Endothelial cell of umbilical vein (primary cell): ENCODE measurements at regions of chr18 and their contacts with region 1.

Region 1: GRCh38 chr18:35386600-35387351 is 9.6 kb upstream of the ZNF396 start:
- DNase-seq: peak; percentile 82
- H3K4me3 ChIP-seq: no peak overlapping the region
- H3K27ac ChIP-seq: no peak overlapping the region
- H3K4me1 ChIP-seq: no peaks in the 10 kb centered on the region
- H3K27me3 ChIP-seq: no peaks in the 10 kb centered on the region
- CTCF ChIP-seq: peak; percentile 79 to 83
- POLR2A ChIP-seq: no peak

Region 2: GRCh38 chr18:35122586-35123224 is 264.1 kb before region 1 on chr18:
- CTCF ChIA-PET with region 1: no interaction called
- POLR2A ChIA-PET with region 1: no interaction called
- dilution Hi-C with region 1: no loop called
- intact Hi-C with region 1: no loop called
- DNase-seq: no peak
- H3K4me3 ChIP-seq: no peak overlapping the region
- H3K27ac ChIP-seq: no peak overlapping the region
- H3K4me1 ChIP-seq: no peaks in the 10 kb centered on the region
- H3K27me3 ChIP-seq: no peaks in the 10 kb centered on the region
- CTCF ChIP-seq: no peak
- POLR2A ChIP-seq: no peak

Region 3: DNA sequence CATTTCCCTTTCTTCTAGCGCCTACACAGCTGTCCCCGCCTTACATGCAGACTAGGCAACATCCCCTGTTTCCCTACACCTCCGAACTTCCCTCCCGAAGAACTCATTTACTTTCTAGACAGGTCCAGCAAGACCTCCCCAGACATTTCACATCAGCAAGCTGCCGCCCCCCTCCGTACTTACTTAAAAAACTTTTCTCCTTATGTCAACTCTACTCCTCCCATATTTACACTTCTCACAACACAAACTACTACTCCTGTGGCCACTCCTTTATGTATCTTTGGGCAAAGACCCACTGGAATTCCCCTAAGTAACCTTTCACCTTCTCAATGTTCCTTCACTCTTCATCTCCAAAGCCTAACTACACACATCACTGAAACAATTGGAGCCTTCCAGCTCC is 166.3 kb before region 1 on chr18:
- CTCF ChIA-PET with region 1: no interaction called
- POLR2A ChIA-PET with region 1: no interaction called
- dilution Hi-C with region 1: no loop called
- intact Hi-C with region 1: no loop called
- DNase-seq: no peak
- H3K4me3 ChIP-seq: no peak overlapping the region
- H3K27ac ChIP-seq: no peak overlapping the region
- H3K4me1 ChIP-seq: no peaks in the 10 kb centered on the region
- H3K27me3 ChIP-seq: peaks cover under 1 to 1% of the 10 kb centered on the region in 2 experiments
- CTCF ChIP-seq: no peak
- POLR2A ChIP-seq: no peak

Region 4: DNA sequence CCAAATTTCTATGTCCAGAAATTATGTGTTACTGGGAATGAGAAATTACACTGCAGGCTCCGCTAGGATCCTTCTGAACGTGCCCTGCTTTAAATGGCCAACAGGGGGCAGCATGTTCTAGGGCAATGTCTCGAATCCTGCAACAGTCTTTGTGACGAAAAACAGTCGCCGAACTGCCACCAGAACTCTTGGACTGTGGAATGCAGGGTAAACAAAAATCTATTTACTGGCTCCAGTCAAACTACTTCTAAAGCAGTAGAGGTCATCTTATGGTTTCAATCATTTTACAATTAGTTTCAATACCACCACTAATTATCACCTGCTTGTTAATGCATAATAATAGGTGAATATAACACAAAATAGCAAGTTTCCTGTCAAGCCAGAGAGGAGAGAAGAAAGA is 155.7 kb before region 1 on chr18:
- CTCF ChIA-PET with region 1: interaction called, 22 read pairs
- POLR2A ChIA-PET with region 1: no interaction called
- dilution Hi-C with region 1: no loop called
- intact Hi-C with region 1: loop called (anchors 1 kb)
- DNase-seq: peak; percentile 79
- H3K4me3 ChIP-seq: no peak overlapping the region
- H3K27ac ChIP-seq: no peak overlapping the region
- H3K4me1 ChIP-seq: no peaks in the 10 kb centered on the region
- H3K27me3 ChIP-seq: no peaks in the 10 kb centered on the region
- CTCF ChIP-seq: peak; percentile 78 to 82
- POLR2A ChIP-seq: no peak

Region 5: DNA sequence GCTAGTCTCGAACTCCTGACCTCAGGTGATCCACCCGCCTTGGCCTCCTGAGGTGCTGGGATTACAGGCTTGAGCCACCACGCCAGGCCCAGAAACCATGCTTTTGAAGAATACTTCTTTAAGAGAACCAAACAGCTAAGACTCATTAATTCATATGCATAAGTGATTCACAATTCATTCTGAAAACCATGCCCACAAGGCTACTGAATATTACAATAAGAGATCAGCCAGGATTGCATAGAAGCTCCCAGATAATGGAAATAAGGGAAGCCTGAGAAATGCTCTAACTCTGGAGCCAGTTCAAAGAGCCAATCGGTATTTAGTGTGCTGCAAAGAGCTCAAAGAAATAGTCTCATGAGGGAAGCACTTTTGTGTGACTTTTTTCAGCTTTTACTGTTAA is 12.1 kb before region 1 on chr18:
- CTCF ChIA-PET with region 1: interaction called, 13 read pairs
- POLR2A ChIA-PET with region 1: no interaction called
- dilution Hi-C with region 1: no loop called
- intact Hi-C with region 1: no loop called
- DNase-seq: no peak
- H3K4me3 ChIP-seq: no peak overlapping the region
- H3K27ac ChIP-seq: no peak overlapping the region
- H3K4me1 ChIP-seq: peaks cover 7% of the 10 kb centered on the region
- H3K27me3 ChIP-seq: peaks cover 5% of the 10 kb centered on the region in 2 experiments
- CTCF ChIP-seq: no peak
- POLR2A ChIP-seq: no peak

Region 6: DNA sequence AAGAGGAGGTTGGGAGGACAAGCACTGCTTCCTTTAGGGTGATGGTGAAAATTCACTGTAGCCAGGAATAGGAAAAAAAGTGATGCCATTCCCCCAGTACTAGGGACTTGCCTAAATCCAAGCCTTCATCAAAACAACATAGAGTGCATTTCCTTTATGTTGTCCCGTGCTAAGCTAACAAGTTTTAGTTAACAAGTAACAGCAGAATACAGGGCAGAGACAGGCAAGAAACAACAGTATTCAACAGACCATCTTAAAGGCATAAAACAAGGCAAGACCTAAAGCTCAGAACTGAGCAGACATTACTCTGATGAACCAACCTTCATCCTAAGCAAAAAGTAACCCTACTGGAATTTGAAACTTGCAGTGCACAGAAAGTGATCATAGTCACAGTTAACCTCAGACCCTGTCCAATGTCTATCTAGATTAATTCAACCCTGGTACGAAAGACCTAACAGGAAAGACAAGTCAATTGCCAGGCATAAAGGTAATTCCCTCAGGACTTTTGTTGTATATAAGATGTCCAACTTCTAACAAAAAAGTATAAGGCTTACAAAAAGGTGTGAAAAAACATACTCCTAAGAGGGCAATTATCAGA is 160.3 kb after region 1 on chr18:
- CTCF ChIA-PET with region 1: no interaction called
- POLR2A ChIA-PET with region 1: no interaction called
- dilution Hi-C with region 1: no loop called
- intact Hi-C with region 1: no loop called
- DNase-seq: no peak
- H3K4me3 ChIP-seq: no peak overlapping the region
- H3K27ac ChIP-seq: no peak overlapping the region
- H3K4me1 ChIP-seq: no peaks in the 10 kb centered on the region
- H3K27me3 ChIP-seq: no peaks in the 10 kb centered on the region
- CTCF ChIP-seq: no peak
- POLR2A ChIP-seq: no peak

Region 7: DNA sequence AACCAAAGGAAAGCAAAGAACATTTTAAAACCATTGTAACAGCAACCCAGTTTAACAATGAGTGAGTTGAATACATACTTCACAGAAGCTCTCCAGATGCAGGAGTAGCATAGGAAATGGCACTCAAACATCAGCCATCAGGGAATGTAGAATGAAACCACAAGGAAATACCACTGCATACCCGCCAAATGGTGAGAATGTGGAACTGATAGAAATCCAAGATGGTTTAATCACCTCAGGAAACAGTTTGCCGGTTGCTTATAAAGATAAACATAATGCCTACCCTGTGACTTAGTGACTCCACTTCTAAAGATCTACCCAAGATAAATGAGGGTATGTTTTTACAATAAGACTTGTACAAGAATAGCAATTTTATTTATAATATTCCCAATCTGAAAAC is 326.8 kb after region 1 on chr18:
- CTCF ChIA-PET with region 1: interaction called, 7 read pairs
- POLR2A ChIA-PET with region 1: no interaction called
- dilution Hi-C with region 1: no loop called
- intact Hi-C with region 1: loop called (anchors 5 kb)
- DNase-seq: peak; percentile 92
- H3K4me3 ChIP-seq: no peak overlapping the region
- H3K27ac ChIP-seq: peak overlapping the region; percentile 96
- H3K4me1 ChIP-seq: peaks cover 76% of the 10 kb centered on the region
- H3K27me3 ChIP-seq: no peaks in the 10 kb centered on the region
- CTCF ChIP-seq: peak in 1 of 2 donors; percentile 9
- POLR2A ChIP-seq: peak; percentile 43

Region 8: DNA sequence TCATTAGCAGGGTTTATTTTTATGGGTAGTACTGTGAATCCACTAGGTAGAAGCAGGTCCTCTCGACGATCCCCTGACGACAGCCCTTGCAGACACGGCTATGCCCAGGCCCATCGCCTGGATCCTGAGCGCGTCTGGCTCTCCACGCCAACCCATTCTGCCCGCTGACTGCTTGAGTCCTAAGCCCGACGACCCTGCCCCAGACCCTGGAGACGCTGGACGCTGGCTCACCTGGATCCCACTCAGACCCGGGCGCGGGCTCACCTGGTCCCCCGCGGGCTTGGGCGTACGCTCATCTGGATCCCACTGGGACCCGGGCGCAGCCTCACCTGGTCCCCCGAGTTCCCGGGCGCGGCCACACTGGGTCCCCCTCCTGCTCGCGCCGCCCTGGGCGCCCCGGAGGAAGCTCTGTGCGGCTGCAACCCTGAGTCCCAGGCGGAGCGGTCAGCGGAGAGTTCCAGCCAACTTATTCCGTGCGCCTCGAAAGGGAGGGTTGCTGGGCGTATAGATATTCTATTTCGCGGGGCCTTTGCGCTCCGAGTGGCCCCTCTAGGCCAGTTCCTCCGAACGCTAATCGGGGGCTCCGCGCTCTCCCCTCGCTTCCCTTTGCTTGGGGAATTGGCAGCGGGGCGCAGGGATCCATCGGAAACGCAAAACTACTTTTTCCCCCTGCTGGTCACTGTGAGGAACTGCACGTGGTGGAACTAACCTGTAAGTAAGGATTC is 563.3 kb after region 1 on chr18:
- CTCF ChIA-PET with region 1: interaction called, 23 read pairs
- POLR2A ChIA-PET with region 1: no interaction called
- dilution Hi-C with region 1: no loop called
- intact Hi-C with region 1: loop called (anchors 1 kb)
- DNase-seq: peak; percentile 67
- H3K4me3 ChIP-seq: peak overlapping the region; percentile 32 to 66 (median 39)
- H3K27ac ChIP-seq: no peak overlapping the region
- H3K4me1 ChIP-seq: peaks cover 3% of the 10 kb centered on the region
- H3K27me3 ChIP-seq: peaks cover 0 to 4% of the 10 kb centered on the region in 2 experiments
- CTCF ChIP-seq: peak; percentile 80 to 82
- POLR2A ChIP-seq: no peak

Region 9: GRCh38 chr18:36025025-36025424 is 638.2 kb after region 1 on chr18:
- CTCF ChIA-PET with region 1: no interaction called
- POLR2A ChIA-PET with region 1: no interaction called
- dilution Hi-C with region 1: no loop called
- intact Hi-C with region 1: no loop called
- DNase-seq: peak; percentile 73
- H3K4me3 ChIP-seq: no peak overlapping the region
- H3K27ac ChIP-seq: no peak overlapping the region
- H3K4me1 ChIP-seq: no peaks in the 10 kb centered on the region
- H3K27me3 ChIP-seq: no peaks in the 10 kb centered on the region
- CTCF ChIP-seq: no peak
- POLR2A ChIP-seq: no peak